IMR-90 (cell line): ENCODE measurements at regions of chr4 and their contacts with region 1.

Region 1: GRCh38 chr4:77156533-77156911 is 485 bp upstream of the CCNG2 start:
- DNase-seq: peak; percentile 99
- ATAC-seq: peak; percentile 86
- H3K4me3 ChIP-seq: peak overlapping the region; percentile 99
- H3K27ac ChIP-seq: peak overlapping the region; percentile 38
- H3K4me1 ChIP-seq: 0 out of 2 replicates have a peak, but pooled peaks cover 2% of the 10 kb centered on the region
- H3K27me3 ChIP-seq: peaks cover 3% of the 10 kb centered on the region; the same call in 1 of the 2 replicates
- CTCF ChIP-seq: no peak
- POLR2A ChIP-seq: no peak
- RAD21 ChIP-seq: no peak

Region 2: DNA sequence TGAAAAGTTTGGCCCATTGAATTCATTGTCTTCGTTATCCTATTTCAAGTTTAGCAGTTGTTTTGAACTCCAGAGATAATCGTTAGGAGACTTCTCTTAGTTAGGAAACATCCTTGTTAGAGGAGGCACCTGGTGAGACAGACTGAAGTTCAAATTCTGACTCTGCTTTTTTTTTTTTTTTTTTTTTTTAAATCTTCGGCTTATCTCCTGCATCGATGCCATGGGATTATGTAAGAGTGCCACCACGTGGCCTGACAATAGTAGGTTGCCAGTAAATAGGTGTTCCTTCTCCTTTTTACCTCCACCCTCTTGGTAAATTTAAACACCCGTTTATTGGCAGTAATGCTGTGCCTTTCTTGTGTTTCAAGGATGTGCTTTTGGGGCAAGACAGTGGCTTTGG is 407.9 kb before region 1 on chr4:
- CTCF ChIA-PET with region 1: no interaction called
- POLR2A ChIA-PET with region 1: no interaction called
- dilution Hi-C with region 1: no loop called
- in situ Hi-C with region 1: loop called (anchors 25 kb)
- intact Hi-C with region 1: loop called (anchors 1 kb)
- DNase-seq: peak; percentile 41
- ATAC-seq: no peak
- H3K4me3 ChIP-seq: no peak overlapping the region
- H3K27ac ChIP-seq: no peak overlapping the region
- H3K4me1 ChIP-seq: peaks cover 11% of the 10 kb centered on the region
- H3K27me3 ChIP-seq: no peaks in the 10 kb centered on the region
- CTCF ChIP-seq: peak; percentile 41
- POLR2A ChIP-seq: no peak
- RAD21 ChIP-seq: peak; percentile 64

Region 3: GRCh38 chr4:76931576-76932276 is 224.8 kb before region 1 on chr4:
- CTCF ChIA-PET with region 1: no interaction called
- POLR2A ChIA-PET with region 1: interaction called, 10 read pairs
- dilution Hi-C with region 1: no loop called
- in situ Hi-C with region 1: no loop called
- intact Hi-C with region 1: no loop called
- DNase-seq: peak; percentile 20
- ATAC-seq: no peak
- H3K4me3 ChIP-seq: no peak overlapping the region
- H3K27ac ChIP-seq: no peak overlapping the region
- H3K4me1 ChIP-seq: peaks cover 2% of the 10 kb centered on the region; the same call in 1 of the 2 replicates
- H3K27me3 ChIP-seq: no peaks in the 10 kb centered on the region
- CTCF ChIP-seq: no peak
- POLR2A ChIP-seq: no peak
- RAD21 ChIP-seq: no peak

Region 4: DNA sequence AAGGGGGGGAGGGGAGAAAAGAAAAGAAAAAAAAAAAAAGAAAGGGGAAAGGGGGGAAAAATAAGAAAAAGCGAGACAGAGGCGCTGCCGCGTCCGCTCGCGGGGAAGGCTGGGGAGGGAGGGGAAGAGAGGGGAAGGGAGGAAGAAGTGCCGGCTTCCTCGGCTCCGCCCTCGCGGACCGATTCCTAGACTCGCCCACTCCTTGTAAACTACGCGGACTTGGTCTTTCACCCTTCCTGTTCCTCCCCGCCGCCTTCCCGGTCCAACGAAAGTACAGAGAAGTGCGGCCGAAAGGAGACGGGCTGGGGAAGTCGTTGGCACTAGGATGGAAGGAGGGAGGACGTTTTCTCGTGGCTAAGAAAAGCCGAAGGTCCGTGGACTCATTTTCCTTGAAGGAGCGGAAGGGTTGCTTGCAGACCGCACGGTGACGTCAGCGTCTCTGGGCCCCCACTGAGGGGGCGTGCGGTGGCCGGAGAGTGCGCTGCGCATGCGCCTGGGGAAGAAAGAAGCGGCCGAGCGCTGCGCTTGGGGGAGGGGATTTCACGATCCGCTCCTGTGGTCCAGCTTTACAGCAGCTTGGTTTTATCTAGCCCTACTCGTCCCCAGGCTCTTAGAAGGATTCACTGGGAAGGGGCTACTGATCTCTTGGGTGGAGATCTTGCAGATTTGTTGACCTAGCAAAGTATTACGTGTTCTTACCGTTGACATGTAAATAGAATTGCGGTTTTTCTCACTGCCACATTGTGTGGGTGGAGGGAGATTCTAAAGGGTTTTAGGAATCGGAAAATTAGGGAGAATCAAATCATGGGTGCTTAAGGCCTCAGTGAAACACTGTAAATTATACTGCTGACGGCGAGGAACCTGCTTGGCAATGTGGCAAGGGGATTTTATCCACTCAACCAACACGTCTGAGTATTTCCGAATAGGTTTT is 80.4 kb before region 1 on chr4 and contains the start of gene CCNI:
- CTCF ChIA-PET with region 1: no interaction called
- POLR2A ChIA-PET with region 1: interaction called, 6 read pairs
- dilution Hi-C with region 1: no loop called
- in situ Hi-C with region 1: no loop called
- intact Hi-C with region 1: loop called (anchors 2 kb)
- DNase-seq: peak; percentile 97
- ATAC-seq: peak; percentile 89
- H3K4me3 ChIP-seq: peak within 1 kb of the TSS; percentile 58
- H3K27ac ChIP-seq: peak within 1 kb of the TSS; percentile 93
- H3K4me1 ChIP-seq: no peaks in the 10 kb centered on the region
- H3K27me3 ChIP-seq: no peaks in the 10 kb centered on the region
- CTCF ChIP-seq: no peak
- POLR2A ChIP-seq: peak; percentile 97
- RAD21 ChIP-seq: no peak
- total RNA-seq, gene CCNI: 98.6 and 100 TPM in 2 replicates

Region 5: DNA sequence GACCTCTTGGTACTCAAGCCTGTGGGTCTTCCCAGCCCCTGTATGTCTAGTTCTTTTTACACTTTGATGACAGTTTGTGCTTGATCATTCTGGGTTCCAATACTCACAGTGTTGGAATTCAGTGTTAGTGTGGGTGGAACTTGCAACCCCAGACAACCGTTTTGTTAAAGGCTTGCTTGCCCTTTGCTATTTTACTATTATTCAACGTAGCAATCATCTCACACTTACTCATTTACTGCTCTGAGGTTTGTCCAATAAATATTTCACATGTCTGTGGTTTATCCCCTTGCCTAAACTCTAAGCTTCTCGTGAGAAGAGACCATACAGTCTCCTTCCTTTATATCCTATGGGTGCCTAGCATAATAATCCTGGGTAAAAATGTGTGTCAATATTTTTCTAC is 15.8 kb after region 1 on chr4:
- CTCF ChIA-PET with region 1: interaction called, 4 read pairs
- POLR2A ChIA-PET with region 1: no interaction called
- dilution Hi-C with region 1: no loop called
- in situ Hi-C with region 1: no loop called
- intact Hi-C with region 1: loop called (anchors 2 kb)
- DNase-seq: peak; percentile 95
- ATAC-seq: peak; percentile 90
- H3K4me3 ChIP-seq: no peak overlapping the region
- H3K27ac ChIP-seq: no peak overlapping the region
- H3K4me1 ChIP-seq: peaks cover 10% of the 10 kb centered on the region
- H3K27me3 ChIP-seq: peaks cover 33% of the 10 kb centered on the region
- CTCF ChIP-seq: no peak
- POLR2A ChIP-seq: no peak
- RAD21 ChIP-seq: no peak

Region 6: DNA sequence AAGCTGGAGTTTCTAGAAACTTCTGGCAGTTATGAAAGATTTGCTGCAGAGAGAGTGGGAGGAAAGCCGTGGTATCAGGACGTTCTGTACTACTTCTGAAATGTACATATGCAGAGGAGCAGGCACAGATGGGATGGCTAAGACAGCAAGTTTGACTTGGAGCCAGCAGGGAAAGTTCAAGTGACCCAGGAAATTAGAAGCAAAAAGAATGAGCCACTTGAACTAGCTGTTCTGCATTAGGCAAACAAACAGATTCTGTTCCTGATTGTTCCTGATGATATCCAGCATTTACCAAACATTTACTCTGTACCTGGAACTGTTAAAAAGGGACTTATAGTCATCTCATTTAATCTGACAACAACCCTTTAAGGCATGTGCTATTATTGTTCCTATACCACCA is 407.7 kb after region 1 on chr4:
- CTCF ChIA-PET with region 1: no interaction called
- POLR2A ChIA-PET with region 1: no interaction called
- dilution Hi-C with region 1: no loop called
- in situ Hi-C with region 1: no loop called
- intact Hi-C with region 1: no loop called
- DNase-seq: no peak
- ATAC-seq: no peak
- H3K4me3 ChIP-seq: no peak overlapping the region
- H3K27ac ChIP-seq: no peak overlapping the region
- H3K4me1 ChIP-seq: no peaks in the 10 kb centered on the region
- H3K27me3 ChIP-seq: no peaks in the 10 kb centered on the region
- CTCF ChIP-seq: no peak
- POLR2A ChIP-seq: no peak
- RAD21 ChIP-seq: no peak